AG04450 (cell line): ENCODE measurements at regions of chr3 and their contacts with region 1.

Region 1: DNA sequence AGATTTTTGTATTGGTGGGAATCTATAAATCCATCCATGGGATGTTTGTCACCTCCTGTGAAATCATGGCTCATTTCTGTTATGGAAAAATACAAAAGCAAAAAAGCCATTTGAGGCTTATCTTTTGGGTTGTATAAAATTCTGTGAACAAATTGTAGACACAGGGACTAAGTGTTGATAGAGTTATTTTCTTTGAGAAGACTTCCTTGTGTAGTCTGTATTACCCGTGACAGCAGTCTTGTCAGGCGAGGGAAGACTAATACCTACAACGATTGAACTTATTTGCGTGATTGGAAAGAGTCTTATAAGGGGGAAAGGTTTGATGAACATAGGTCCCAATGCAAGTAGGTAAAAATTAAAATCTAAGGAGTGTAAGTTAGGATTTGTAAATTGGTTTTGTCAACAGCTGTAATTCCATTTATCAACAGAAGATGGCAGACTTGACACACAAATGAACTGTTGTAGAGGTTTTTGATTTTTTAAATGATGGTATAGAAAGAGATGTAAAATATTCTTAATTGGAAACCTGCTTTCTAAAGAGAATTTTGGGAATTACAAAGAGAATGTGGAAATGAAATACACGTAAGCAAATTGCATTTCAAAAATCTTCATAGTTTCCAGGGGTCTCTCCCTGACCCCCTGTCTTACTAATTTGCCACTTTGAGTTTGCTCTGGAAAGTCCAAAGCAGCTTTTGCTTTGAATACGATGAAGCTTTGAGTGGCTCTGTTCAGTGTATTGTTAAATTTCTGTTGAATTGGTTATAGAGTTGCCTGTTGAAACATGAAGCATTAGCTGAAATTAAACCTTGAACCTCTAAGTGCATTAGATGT is 33.2 kb downstream of the SLC25A26 start:
- DNase-seq: no peak
- H3K4me3 ChIP-seq: no peak overlapping the region
- H3K27ac ChIP-seq: no peak overlapping the region
- H3K27me3 ChIP-seq: no peaks in the 10 kb centered on the region
- CTCF ChIP-seq: peak; percentile 62

Region 2: DNA sequence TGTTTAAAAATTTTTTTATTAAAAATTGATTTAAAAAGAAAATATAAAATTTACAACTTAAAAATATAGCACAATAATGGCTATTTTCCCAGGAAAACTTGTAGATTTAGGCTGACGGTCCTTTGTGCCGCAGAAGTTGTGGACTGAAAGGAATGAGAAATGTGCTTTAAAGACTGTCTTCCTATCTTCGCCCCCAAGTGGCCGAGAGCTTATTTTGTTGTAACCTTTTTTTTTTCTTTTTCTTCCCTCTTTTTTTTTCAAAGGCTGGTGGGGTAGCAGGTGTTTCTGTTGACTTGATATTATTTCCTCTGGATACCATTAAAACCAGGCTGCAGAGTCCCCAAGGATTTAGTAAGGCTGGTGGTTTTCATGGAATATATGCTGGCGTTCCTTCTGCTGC is 17.7 kb before region 1 on chr3:
- CTCF ChIA-PET with region 1: interaction called, 10 read pairs
- POLR2A ChIA-PET with region 1: no interaction called
- DNase-seq: no peak
- H3K4me3 ChIP-seq: no peak overlapping the region
- H3K27ac ChIP-seq: no peak overlapping the region
- H3K27me3 ChIP-seq: no peaks in the 10 kb centered on the region
- CTCF ChIP-seq: no peak; the same call in 1 of the 2 replicates

Region 3: GRCh38 chr3:66378256-66378823 is 124.3 kb after region 1 on chr3:
- CTCF ChIA-PET with region 1: interaction called, 12 read pairs
- POLR2A ChIA-PET with region 1: no interaction called
- DNase-seq: no peak
- H3K4me3 ChIP-seq: no peak overlapping the region
- H3K27ac ChIP-seq: no peak overlapping the region
- H3K27me3 ChIP-seq: no peaks in the 10 kb centered on the region
- CTCF ChIP-seq: peak; percentile 55

Region 4: DNA sequence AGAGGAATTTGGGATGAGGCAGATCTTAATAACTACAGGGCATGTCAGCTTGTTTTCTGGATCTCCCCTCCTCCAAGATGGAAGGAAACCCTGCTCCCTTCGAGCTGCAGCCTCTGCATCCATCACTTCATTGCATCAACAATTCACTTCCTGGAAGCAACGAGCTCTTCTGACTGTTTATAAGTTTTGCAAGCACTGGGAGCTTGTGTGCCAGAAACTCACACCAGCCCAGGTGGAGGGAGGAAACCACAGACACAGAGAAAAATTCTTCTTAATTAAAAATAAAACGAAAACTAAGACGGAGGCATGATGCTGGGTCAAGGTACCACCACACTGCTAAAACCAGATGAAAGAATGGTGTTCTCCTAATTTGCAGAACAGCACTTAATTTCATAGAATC is 236.2 kb after region 1 on chr3:
- CTCF ChIA-PET with region 1: interaction called, 11 read pairs
- POLR2A ChIA-PET with region 1: no interaction called
- DNase-seq: peak; percentile 76
- H3K4me3 ChIP-seq: peak overlapping the region; percentile 35
- H3K27ac ChIP-seq: peak overlapping the region; percentile 58
- H3K27me3 ChIP-seq: no peaks in the 10 kb centered on the region
- CTCF ChIP-seq: no peak

Region 5: DNA sequence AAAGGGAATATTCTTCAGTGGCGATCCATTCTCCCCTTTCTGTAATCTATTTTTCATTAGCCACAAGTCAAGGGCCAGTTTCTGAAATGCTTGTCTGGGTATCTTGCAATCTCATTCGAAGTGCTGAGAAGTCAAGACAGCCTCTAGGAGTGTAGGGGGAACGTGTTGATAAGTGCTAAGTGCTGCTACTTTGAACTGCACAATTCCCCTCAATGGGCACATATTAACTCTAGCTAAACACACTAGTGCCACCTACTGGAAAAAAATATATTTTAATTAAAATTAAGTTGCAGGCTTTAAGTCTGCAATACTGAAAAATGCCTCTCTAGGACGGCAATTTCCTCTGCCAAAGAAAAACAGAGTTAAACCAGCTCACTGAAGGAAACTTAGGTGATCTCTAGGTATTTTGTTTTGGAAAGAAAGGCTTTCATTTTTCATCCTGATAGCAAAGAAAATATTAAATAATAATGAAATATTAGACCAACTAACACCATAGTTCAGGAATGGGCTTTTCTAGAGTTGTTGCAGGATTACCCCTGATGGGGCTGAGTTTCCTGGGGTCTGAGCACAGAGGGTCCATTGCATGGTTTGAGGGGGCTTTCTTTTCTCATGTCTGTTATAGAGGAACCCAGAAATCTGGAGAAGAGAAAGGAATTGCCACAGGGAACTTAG is 562.2 kb after region 1 on chr3:
- CTCF ChIA-PET with region 1: interaction called, 72 read pairs
- POLR2A ChIA-PET with region 1: no interaction called
- DNase-seq: peak; percentile 47
- H3K4me3 ChIP-seq: no peak overlapping the region
- H3K27ac ChIP-seq: no peak overlapping the region
- H3K27me3 ChIP-seq: no peaks in the 10 kb centered on the region
- CTCF ChIP-seq: peak; percentile 69

Region 6: GRCh38 chr3:66822186-66823008 is 568.4 kb after region 1 on chr3:
- CTCF ChIA-PET with region 1: interaction called, 72 read pairs
- POLR2A ChIA-PET with region 1: no interaction called
- DNase-seq: peak; percentile 42
- H3K4me3 ChIP-seq: no peak overlapping the region
- H3K27ac ChIP-seq: no peak overlapping the region
- H3K27me3 ChIP-seq: peaks cover 2% of the 10 kb centered on the region
- CTCF ChIP-seq: peak; percentile 84

Region 7: DNA sequence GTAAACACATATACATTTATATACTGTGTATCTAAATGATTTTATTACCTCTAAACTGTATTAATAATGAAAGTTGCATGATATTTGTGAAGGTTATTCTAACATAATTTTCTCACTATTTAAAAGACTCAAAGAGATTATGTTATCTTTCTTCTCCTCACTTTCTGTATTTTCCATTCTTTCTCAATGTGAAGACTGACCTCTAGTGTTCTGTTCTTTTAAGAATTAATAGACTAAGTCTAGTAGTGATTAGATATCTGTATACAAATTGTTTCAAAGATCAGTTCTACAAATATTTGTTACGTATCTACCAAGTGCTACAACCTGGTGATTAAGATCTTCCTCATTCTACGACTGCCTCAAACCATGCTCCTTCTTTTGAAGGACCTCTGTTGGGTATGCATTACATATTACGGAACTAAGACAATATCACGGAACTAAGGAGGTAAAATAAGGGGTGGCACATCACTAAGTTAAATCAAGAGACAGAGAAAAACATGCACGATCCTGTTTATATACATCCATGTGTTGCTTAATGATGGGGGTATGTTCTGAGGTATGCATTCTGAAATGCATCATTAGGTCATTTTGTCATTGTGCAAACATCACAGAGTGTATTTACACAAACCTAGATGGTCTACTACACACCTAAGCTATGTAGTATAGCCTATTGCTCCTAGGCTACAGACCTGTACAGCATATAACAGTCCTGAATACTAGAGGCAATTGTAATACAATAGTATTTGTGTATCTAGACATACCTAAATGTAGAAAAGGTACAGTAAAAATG is 582.6 kb after region 1 on chr3:
- CTCF ChIA-PET with region 1: interaction called, 15 read pairs
- POLR2A ChIA-PET with region 1: no interaction called
- DNase-seq: no peak
- H3K4me3 ChIP-seq: no peak overlapping the region
- H3K27ac ChIP-seq: no peak overlapping the region
- H3K27me3 ChIP-seq: peaks cover 10% of the 10 kb centered on the region
- CTCF ChIP-seq: peak; percentile 35